CD4-positive, alpha-beta T cell (primary cell): ENCODE measurements at regions of chr1 and their contacts with region 1.

Region 1: GRCh38 chr1:114997510-114998289 is 31.9 kb upstream of the TSHB start:
- DNase-seq: no peak
- ATAC-seq: no peak
- H3K4me3 ChIP-seq: no peak overlapping the region
- H3K4me3 Mint-ChIP-seq: no peak overlapping the region
- H3K27ac ChIP-seq: no peak overlapping the region
- H3K27ac Mint-ChIP-seq: no peak overlapping the region
- H3K4me1 ChIP-seq: no peaks in the 10 kb centered on the region
- H3K4me1 Mint-ChIP-seq: no peaks in the 10 kb centered on the region
- H3K27me3 ChIP-seq: no peaks in the 10 kb centered on the region
- H3K27me3 Mint-ChIP-seq: peaks cover 12% of the 10 kb centered on the region
- CTCF ChIP-seq: no peak

Region 2: DNA sequence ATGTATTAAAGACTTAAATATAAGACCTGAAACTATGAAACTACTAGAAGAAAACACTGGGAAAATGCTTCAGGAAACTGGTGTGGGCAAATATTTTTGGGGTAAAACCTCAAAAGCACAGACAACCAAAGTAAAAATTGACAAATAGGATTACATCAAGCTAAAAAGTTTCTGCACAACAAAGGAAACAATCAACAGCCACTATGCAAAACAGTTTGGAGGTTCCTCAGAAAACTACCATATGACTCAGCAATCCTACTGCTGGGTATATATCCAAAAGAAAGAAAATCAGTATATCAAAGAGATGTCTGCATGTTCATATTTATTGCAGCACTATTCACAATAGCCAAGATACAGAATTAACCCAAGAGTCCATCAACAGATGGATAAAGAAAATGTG is 49.1 kb after region 1 on chr1:
- CTCF ChIA-PET with region 1: no interaction called
- POLR2A ChIA-PET with region 1: no interaction called
- intact Hi-C with region 1: loop called in 1 of 2 experiments (anchors 5 kb)
- DNase-seq: no peak
- ATAC-seq: no peak
- H3K4me3 ChIP-seq: no peak overlapping the region
- H3K4me3 Mint-ChIP-seq: no peak overlapping the region
- H3K27ac ChIP-seq: no peak overlapping the region
- H3K27ac Mint-ChIP-seq: no peak overlapping the region
- H3K4me1 ChIP-seq: no peaks in the 10 kb centered on the region
- H3K4me1 Mint-ChIP-seq: no peaks in the 10 kb centered on the region
- H3K27me3 ChIP-seq: no peaks in the 10 kb centered on the region
- H3K27me3 Mint-ChIP-seq: no peaks in the 10 kb centered on the region
- CTCF ChIP-seq: no peak